ENCODE measurements at regions of chr5 and their contacts with region 1.

Region 1: GRCh38 chr5:123371575-123372179 is 51.5 kb downstream of the CEP120 start:
- DNase-seq: peak in 1 of 2 experiments; percentile 14
- H3K4me3 ChIP-seq: no peak overlapping the region
- H3K27ac ChIP-seq: no peak overlapping the region
- H3K4me1 ChIP-seq: no peaks in the 10 kb centered on the region
- H3K27me3 ChIP-seq: no peaks in the 10 kb centered on the region
- CTCF ChIP-seq: peak; percentile 59

Region 2: DNA sequence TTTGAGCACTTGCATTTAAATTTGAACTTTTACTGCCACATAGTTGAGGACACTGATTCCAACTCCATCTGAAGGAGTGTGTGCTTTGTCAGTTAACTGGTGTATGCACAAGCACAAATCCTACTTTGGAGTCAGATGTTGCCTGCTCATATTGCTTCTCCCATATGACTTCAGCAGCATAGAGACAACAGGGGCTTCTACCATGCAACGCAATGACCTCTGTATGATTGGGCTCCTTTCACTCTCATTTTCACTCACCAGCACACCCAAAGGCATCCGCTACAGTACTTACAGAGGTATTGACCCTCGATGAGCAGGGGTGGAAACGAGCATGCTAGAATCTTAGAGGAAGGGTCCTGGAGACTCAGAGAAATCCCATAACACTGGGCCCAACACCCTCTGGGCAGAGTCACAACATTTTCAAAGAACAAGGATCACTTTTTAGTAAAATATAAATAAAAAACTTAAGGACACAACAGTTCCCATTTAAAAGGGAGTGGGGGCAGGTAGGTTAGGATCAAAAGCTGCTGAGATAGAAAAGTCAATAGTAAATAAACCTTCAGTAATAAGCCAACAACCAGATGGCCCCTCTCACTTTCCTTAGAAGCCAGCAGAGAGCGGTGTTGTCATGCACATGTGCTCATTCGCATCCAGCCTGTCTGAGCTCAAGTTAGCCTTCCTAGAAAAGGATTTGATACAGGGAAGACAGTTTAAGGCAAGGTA is 855.8 kb before region 1 on chr5:
- CTCF ChIA-PET with region 1: interaction called, 3 read pairs
- POLR2A ChIA-PET with region 1: no interaction called
- intact Hi-C with region 1: loop called (anchors 5 kb)
- DNase-seq: peak; percentile 32 to 59
- H3K4me3 ChIP-seq: no peak overlapping the region
- H3K27ac ChIP-seq: no peak overlapping the region
- H3K4me1 ChIP-seq: no peaks in the 10 kb centered on the region
- H3K27me3 ChIP-seq: no peaks in the 10 kb centered on the region
- CTCF ChIP-seq: peak; percentile 77

Region 3: DNA sequence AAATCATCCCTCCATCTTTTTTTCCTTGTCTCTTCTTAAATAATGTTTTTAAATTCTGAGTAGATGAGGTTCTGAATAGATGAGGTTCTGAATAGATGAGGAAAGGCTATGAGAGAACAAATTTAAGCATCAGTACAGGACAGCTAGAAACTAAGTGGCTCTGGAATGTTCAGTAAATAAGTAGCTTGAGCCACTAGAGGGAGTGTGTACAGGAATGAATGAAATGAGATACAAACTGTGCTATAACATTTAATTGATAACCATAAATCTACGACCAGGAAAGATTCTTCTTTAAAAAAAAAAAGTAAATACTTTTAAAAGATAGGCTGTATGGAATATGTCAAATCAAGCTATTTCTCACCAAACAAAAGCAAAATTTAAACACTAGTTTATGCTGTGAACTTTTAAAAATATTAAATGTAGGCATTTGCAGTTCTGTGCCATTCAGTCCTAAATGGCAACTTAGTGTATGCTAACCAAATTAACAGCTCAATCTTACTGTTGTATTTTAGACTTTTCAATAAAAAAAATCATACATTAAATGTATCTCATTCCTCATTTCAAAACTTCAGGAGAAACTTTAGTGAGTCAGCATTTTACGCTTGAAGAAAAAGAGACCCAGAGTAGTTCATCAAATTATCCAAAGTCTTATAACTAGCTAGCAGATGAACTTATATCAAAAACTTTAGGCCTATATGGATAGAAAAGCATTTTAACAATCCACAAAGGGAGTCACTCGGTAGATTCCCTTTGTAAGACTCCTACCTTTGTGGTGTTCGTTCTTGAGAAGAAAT is 667.2 kb before region 1 on chr5:
- CTCF ChIA-PET with region 1: no interaction called
- POLR2A ChIA-PET with region 1: no interaction called
- intact Hi-C with region 1: loop called (anchors 10 kb)
- DNase-seq: no peak
- H3K4me3 ChIP-seq: no peak overlapping the region
- H3K27ac ChIP-seq: no peak overlapping the region
- H3K4me1 ChIP-seq: no peaks in the 10 kb centered on the region
- H3K27me3 ChIP-seq: no peaks in the 10 kb centered on the region
- CTCF ChIP-seq: peak; percentile 73

Region 4: GRCh38 chr5:122896598-122897282 is 474.9 kb before region 1 on chr5:
- CTCF ChIA-PET with region 1: no interaction called
- POLR2A ChIA-PET with region 1: no interaction called
- intact Hi-C with region 1: loop called (anchors 5 kb)
- DNase-seq: no peak
- H3K4me3 ChIP-seq: no peak overlapping the region
- H3K27ac ChIP-seq: no peak overlapping the region
- H3K4me1 ChIP-seq: no peaks in the 10 kb centered on the region
- H3K27me3 ChIP-seq: no peaks in the 10 kb centered on the region
- CTCF ChIP-seq: peak; percentile 60

Measured in PC-9 (cell line).